Aorta (tissue), 5 donors: ENCODE measurements at regions of chr10 and their contacts with region 1.

Region 1: DNA sequence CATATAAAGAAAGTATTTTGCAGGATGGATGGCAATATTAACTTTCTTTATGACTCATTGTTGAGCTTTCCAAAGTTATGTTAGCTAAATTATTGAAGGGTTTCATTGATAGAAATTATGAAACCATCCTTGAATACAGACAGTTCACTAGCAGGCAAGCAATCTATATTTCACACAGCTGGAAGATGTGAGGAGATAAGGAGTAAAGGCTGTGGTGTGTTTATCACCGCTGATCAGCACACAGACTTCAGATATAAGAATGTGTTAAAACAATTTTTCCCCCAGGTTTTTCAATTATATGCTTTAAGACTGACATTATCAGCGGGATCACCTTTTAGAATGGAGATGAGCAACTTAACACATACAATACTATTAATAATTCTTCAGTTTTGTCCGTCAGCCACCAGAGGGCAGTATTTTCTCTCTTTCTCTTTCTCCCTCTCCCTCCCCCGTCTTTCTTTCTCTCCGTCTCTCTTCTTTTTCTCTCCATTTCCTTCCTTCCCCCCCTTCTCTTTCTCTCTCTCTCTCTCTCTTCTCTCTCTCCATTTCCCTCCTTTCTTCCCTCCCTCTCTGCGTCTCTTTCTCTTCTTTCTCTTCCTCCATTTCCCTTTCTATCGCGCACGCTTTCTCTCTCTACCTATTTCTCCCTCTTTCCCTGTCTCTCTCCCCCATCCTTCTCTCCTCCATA is 62.9 kb upstream of the FAM171A1 start:
- DNase-seq: no peak
- ATAC-seq: peak; percentile 68
- H3K4me3 ChIP-seq: peak overlapping the region; percentile 24 to 56
- H3K27ac ChIP-seq: peak overlapping the region in 1 of 2 donors; percentile 87
- H3K4me1 ChIP-seq: peaks cover 0 to 2% of the 10 kb centered on the region in 2 donors
- H3K27me3 ChIP-seq: no peaks in the 10 kb centered on the region

Region 2: DNA sequence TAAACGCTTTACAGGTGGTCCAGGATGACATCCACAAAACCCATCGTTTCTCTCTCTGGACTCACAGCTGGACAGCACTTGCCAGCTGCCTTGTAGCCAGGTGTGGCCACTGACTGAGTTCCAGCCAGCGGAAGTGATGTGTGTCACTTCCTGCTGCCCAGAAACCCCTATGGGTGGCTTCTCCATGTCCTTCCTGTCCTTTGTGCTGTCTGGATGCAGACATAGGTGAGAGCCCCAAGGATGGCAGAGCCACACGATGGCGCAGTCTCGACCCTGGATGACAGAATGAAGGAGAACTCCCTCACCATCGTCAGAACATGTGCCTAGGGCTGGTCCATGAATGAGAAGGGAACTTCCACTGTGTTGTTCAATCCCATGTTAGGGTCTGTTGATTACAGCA is 287.6 kb before region 1 on chr10:
- intact Hi-C with region 1: no loop called
- DNase-seq: no peak
- ATAC-seq: no peak
- H3K4me3 ChIP-seq: no peak overlapping the region
- H3K27ac ChIP-seq: no peak overlapping the region
- H3K4me1 ChIP-seq: no peaks in the 10 kb centered on the region
- H3K27me3 ChIP-seq: no peaks in the 10 kb centered on the region

Region 3: GRCh38 chr10:15585303-15585715 is 151.3 kb after region 1 on chr10:
- intact Hi-C with region 1: loop called in 1 of 2 experiments (anchors 5 kb)
- DNase-seq: peak; percentile 67 to 86
- ATAC-seq: peak; percentile 89
- H3K4me3 ChIP-seq: no peak overlapping the region
- H3K27ac ChIP-seq: peak overlapping the region in 1 of 2 donors; percentile 43
- H3K4me1 ChIP-seq: peaks cover 2 to 3% of the 10 kb centered on the region in 2 donors
- H3K27me3 ChIP-seq: no peaks in the 10 kb centered on the region